Endothelial cell of umbilical vein (primary cell): ENCODE measurements at regions of chr7 and their contacts with region 1.

Region 1: DNA sequence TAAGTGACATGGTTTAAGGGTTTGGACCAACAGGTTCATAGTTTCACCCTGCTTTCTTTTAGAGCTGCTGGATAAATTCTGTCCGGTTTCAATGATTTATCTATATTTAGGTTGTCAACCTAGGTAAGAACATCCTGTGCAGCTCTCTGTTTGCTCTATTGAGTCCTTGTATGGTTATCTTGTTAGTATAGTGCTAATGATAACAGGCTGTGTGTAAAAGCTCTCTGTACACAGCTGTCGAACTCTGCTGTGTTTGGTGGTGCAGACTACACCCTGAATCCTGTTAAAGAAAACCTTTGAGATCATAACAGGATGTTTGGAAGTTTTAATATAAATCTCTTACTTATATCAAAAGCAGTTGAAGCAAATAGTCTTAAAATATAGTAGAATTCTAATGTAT is 219.2 kb downstream of the SDK1 start:
- DNase-seq: no peak
- H3K4me3 ChIP-seq: no peak overlapping the region
- H3K27ac ChIP-seq: no peak overlapping the region
- H3K4me1 ChIP-seq: no peaks in the 10 kb centered on the region
- H3K27me3 ChIP-seq: no peaks in the 10 kb centered on the region
- CTCF ChIP-seq: no peak
- POLR2A ChIP-seq: no peak

Region 2: DNA sequence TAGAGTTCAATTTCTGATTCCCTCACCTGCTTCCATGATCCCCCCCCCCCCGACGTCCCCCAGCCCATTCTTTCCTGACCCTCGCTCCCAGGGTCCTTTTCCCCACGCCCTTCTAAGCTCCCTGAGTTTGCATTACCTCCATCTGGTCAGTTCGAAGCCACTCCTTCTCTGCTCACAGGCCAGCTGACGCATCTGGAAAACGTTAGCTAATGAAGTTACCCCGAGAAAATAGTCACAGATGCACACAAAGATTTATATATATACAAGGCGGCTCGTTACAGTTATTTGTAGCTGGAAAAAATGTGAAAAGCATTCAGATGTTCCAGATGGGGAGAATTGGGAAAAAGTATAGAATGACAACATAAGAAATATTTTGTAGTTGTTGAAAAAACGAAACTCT is 531.9 kb after region 1 on chr7:
- CTCF ChIA-PET with region 1: no interaction called
- POLR2A ChIA-PET with region 1: no interaction called
- dilution Hi-C with region 1: no loop called
- intact Hi-C with region 1: loop called (anchors 10 kb)
- DNase-seq: no peak
- H3K4me3 ChIP-seq: no peak overlapping the region
- H3K27ac ChIP-seq: no peak overlapping the region
- H3K4me1 ChIP-seq: no peaks in the 10 kb centered on the region
- H3K27me3 ChIP-seq: no peaks in the 10 kb centered on the region
- CTCF ChIP-seq: no peak
- POLR2A ChIP-seq: no peak